GM10248 (cell line): ENCODE measurements at regions of chr14 and their contacts with region 1.

Region 1: GRCh38 chr14:64400829-64401459 is 12.8 kb downstream of the MTHFD1 start:
- DNase-seq: no peak
- CTCF ChIP-seq: no peak

Region 2: GRCh38 chr14:64324895-64325294 is 76.0 kb before region 1 on chr14:
- CTCF ChIA-PET with region 1: no interaction called
- POLR2A ChIA-PET with region 1: no interaction called
- DNase-seq: no peak
- CTCF ChIP-seq: no peak

Region 3: GRCh38 chr14:64363265-64363846 is 37.6 kb before region 1 on chr14:
- CTCF ChIA-PET with region 1: no interaction called
- POLR2A ChIA-PET with region 1: no interaction called
- DNase-seq: no peak
- CTCF ChIP-seq: no peak

Region 4: GRCh38 chr14:64387694-64388532 is 13.0 kb before region 1 on chr14 and contains the start of gene MTHFD1:
- CTCF ChIA-PET with region 1: interaction called, 48 read pairs
- POLR2A ChIA-PET with region 1: interaction called, 5 read pairs
- DNase-seq: peak; percentile 98
- CTCF ChIP-seq: no peak